ENCODE measurements at regions of chr6 and their contacts with region 1.

Region 1: GRCh38 chr6:220721-221475 is 71.4 kb upstream of the DUSP22 start:
- DNase-seq: no peak
- ATAC-seq: no peak
- H3K4me3 ChIP-seq: no peak overlapping the region
- H3K27ac ChIP-seq: no peak overlapping the region
- H3K4me1 ChIP-seq: no peaks in the 10 kb centered on the region
- H3K27me3 ChIP-seq: no peaks in the 10 kb centered on the region
- CTCF ChIP-seq: no peak

Region 2: DNA sequence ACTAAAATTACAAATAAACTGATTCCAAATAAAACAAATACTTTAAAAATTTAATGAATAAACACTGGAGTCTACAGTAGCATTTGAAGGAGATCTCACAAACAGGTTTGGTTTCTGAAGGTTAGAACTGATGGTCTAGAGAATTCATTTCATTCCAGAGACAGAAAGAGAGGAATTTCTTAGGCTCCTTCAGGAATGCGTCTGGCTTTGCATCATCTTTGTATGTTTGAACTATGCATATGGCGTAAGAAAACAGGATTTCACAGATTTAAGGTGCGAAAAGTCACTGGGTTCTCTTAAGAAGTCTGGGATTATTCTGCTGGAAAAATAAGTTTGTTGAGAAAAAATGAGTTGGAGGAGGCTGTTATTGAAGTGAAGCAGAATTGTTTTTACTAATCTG is 68.5 kb before region 1 on chr6:
- CTCF ChIA-PET with region 1: no interaction called
- POLR2A ChIA-PET with region 1: no interaction called
- in situ Hi-C with region 1: no loop called
- intact Hi-C with region 1: no loop called
- DNase-seq: no peak
- ATAC-seq: no peak
- H3K4me3 ChIP-seq: no peak overlapping the region
- H3K27ac ChIP-seq: no peak overlapping the region
- H3K4me1 ChIP-seq: no peaks in the 10 kb centered on the region
- H3K27me3 ChIP-seq: no peaks in the 10 kb centered on the region
- CTCF ChIP-seq: no peak

Region 3: GRCh38 chr6:195861-196360 is 25.0 kb before region 1 on chr6:
- CTCF ChIA-PET with region 1: no interaction called
- POLR2A ChIA-PET with region 1: no interaction called
- in situ Hi-C with region 1: no loop called
- intact Hi-C with region 1: no loop called
- DNase-seq: no peak
- ATAC-seq: no peak
- H3K4me3 ChIP-seq: no peak overlapping the region
- H3K27ac ChIP-seq: no peak overlapping the region
- H3K4me1 ChIP-seq: no peaks in the 10 kb centered on the region
- H3K27me3 ChIP-seq: no peaks in the 10 kb centered on the region
- CTCF ChIP-seq: no peak

Region 4: GRCh38 chr6:307065-307814 is 86.3 kb after region 1 on chr6:
- CTCF ChIA-PET with region 1: no interaction called
- POLR2A ChIA-PET with region 1: interaction called, 21 read pairs
- in situ Hi-C with region 1: no loop called
- intact Hi-C with region 1: no loop called
- DNase-seq: no peak
- ATAC-seq: no peak
- H3K4me3 ChIP-seq: no peak overlapping the region
- H3K27ac ChIP-seq: no peak overlapping the region
- H3K4me1 ChIP-seq: no peaks in the 10 kb centered on the region
- H3K27me3 ChIP-seq: no peaks in the 10 kb centered on the region
- CTCF ChIP-seq: no peak